ENCODE measurements at regions of chr16 and their contacts with region 1.

Region 1: DNA sequence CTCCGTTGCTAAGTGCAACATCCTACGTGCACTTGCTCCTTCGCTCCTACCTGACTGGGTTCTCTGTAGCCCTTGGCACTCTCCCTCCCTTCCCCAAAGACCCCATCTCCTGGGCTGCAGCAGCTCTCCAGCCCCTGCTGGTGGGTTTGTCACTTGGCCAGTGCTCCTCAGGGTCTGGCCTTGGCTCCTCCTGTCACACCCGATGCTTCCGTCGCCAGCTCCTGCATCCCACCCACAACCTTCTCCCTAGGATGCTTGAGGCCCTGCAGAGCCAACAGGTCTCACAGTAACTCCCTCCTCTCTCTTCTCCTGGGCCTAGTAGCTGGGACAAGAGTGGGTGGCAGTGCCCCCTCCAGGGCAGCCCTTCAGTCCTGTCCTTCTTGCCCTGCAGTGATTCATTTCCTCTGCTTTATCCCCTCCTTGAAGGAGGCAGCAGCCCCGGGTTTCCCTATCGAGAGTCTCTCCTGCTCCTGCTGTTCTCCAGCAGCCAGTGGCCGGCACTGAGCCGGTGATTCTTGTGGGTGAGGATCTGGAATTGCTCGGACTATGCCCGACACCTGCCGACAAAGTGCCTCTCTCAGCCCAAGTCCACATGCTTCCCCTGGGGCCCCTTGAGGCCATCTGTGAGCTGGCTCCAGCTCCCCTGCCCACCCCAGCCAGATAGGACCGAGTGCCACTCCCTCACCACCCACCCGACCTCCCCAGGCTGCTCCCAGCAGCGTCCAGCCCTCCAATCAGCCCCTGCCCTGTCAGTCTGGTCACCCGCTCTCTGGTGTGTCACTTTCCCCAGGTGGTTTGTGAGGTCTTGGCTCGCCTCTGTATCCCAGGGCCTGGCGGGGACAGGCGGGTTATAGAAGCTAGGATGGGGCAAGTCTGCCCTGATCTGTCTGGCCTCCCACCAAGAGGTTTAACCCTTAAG is 3.8 kb downstream of the LITAFD start:
- DNase-seq: no peak
- ATAC-seq: peak; percentile 22
- H3K4me3 Mint-ChIP-seq: no peak overlapping the region
- H3K27ac Mint-ChIP-seq: peak overlapping the region; percentile 19
- H3K4me1 Mint-ChIP-seq: peaks cover 24% of the 10 kb centered on the region
- H3K27me3 Mint-ChIP-seq: peaks cover 10% of the 10 kb centered on the region
- CTCF ChIP-seq: no peak

Region 2: DNA sequence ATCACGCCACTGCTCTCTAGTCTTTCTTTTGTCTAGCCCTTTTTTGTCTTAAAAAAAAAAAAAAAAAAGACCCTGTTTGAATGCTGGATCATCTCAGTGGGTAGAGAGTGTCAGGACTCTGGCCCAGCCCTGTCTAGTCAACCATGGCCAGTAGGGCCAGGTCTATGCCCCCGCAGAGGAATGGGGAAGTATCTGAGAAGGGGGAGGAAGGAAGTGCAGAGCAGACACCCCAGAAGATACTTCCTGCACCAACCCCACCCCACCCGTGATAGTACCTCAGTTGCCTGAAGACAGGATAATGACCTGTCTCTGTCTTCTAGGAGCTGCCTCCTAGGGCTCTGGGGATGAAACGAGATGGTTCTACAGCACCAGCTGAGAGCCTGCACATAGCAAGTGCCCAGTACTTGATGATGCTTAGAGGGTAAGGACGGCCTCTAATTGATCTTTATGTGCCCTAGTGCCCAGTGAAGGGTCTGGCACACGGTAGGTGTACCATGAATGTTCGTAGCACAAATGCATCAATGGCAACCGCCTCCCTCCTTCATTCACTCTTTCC is 156.1 kb before region 1 on chr16:
- CTCF ChIA-PET with region 1: no interaction called
- POLR2A ChIA-PET with region 1: no interaction called
- intact Hi-C with region 1: no loop called
- DNase-seq: peak; percentile 40
- ATAC-seq: peak; percentile 100
- H3K4me3 Mint-ChIP-seq: peak overlapping the region; percentile 73
- H3K27ac Mint-ChIP-seq: peak overlapping the region; percentile 85
- H3K4me1 Mint-ChIP-seq: peaks cover 59% of the 10 kb centered on the region
- H3K27me3 Mint-ChIP-seq: no peaks in the 10 kb centered on the region
- CTCF ChIP-seq: no peak

Region 3: DNA sequence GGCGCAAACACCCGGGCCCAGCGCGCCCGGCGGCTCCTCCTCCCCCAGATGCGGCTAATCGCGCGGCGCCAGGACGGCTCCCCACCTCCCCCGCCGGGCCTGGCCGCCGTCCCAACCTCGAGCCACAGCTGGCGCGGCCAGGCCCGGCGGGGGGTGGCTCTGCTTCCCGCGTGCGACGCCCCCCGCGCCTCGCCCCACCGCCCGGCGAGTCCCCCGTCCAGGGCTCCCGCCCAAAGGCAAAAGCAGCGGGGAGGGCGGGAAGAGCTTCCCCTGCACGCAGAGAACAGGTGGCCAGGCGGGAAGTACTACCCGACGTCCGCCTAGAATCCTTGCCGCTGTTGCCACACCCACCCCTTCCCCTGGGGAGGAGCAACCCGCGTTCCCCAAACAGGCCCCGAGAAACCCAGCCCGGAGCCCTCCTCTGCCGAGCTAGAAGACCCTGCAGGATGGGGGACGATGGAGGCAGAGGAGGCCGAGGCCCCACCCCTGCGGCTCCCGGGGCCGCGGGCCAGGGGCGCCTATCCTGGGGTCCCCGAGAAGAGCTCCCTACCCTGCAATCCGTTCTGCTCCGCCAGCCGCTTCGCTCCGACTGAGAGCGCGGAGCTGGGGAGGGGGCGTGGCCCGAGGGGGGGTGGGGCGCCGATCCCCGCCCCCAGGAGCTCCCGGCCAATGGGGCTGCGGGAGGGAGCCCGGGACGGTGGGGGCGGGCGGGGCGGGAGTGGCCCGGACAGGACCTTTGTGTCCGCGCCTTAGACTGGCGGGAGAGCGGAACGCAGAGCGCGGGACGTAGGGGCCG is 17.3 kb before region 1 on chr16 and contains the start of gene CARHSP1:
- CTCF ChIA-PET with region 1: interaction called, 36 read pairs
- POLR2A ChIA-PET with region 1: interaction called, 50 read pairs
- intact Hi-C with region 1: loop called (anchors 1 kb)
- DNase-seq: peak; percentile 77
- ATAC-seq: peak; percentile 79
- H3K4me3 Mint-ChIP-seq: peak within 1 kb of the TSS; percentile 93
- H3K27ac Mint-ChIP-seq: peak within 1 kb of the TSS; percentile 85
- H3K4me1 Mint-ChIP-seq: peaks cover 60% of the 10 kb centered on the region
- H3K27me3 Mint-ChIP-seq: no peaks in the 10 kb centered on the region
- CTCF ChIP-seq: no peak
- total RNA-seq, gene CARHSP1: 21.3 and 27.0 TPM in 2 replicates

Region 4: GRCh38 chr16:8928467-8928957 is 42.6 kb after region 1 on chr16:
- CTCF ChIA-PET with region 1: no interaction called
- POLR2A ChIA-PET with region 1: no interaction called
- intact Hi-C with region 1: loop called (anchors 1 kb)
- DNase-seq: no peak
- ATAC-seq: peak; percentile 43
- H3K4me3 Mint-ChIP-seq: peak overlapping the region; percentile 41
- H3K27ac Mint-ChIP-seq: peak overlapping the region; percentile 79
- H3K4me1 Mint-ChIP-seq: peaks cover 51% of the 10 kb centered on the region
- H3K27me3 Mint-ChIP-seq: no peaks in the 10 kb centered on the region
- CTCF ChIP-seq: no peak

Region 5: GRCh38 chr16:8943966-8944759 is 58.2 kb after region 1 on chr16:
- CTCF ChIA-PET with region 1: no interaction called
- POLR2A ChIA-PET with region 1: interaction called, 3 read pairs
- intact Hi-C with region 1: loop called (anchors 1 kb)
- DNase-seq: no peak
- ATAC-seq: peak; percentile 83
- H3K4me3 Mint-ChIP-seq: peak overlapping the region; percentile 80
- H3K27ac Mint-ChIP-seq: peak overlapping the region; percentile 88
- H3K4me1 Mint-ChIP-seq: peaks cover 99% of the 10 kb centered on the region
- H3K27me3 Mint-ChIP-seq: no peaks in the 10 kb centered on the region
- CTCF ChIP-seq: no peak

Region 6: DNA sequence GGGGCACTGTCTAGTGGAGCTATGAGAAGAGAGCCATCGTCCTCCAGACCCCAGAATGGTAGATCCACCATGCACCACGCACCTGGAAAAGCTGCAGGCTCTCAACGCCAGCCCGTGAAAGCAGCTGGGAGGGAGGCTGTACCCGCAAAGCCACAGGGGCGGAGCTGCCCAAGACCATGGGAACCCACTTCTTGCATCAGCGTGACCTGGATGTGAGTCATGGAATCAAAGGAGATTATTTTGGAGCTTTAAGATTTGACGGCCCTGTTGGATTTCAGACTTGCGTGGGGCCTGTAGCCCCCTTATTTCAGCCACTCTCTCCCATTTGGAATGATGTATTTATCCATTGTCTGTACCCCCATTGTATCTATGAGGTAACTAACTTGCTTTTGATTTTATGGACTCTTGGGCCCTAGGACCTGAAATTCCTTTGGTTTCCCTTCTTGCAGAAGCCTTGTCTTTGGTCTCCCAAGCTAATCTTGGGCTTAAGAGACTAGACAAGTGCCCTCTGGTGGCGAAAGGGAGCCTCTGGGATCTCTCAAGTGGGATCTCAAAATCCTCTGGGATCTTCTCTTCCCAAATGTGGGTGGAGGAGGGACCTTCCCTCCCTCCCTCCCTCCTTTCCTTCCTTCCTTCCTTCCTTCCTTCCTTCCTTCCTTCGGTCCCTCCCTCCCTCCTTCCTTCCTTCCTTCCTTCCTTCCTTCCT is 147.3 kb after region 1 on chr16:
- CTCF ChIA-PET with region 1: interaction called, 5 read pairs
- POLR2A ChIA-PET with region 1: interaction called, 4 read pairs
- intact Hi-C with region 1: loop called (anchors 1 kb)
- DNase-seq: no peak
- ATAC-seq: no peak
- H3K4me3 Mint-ChIP-seq: no peak overlapping the region
- H3K27ac Mint-ChIP-seq: no peak overlapping the region
- H3K4me1 Mint-ChIP-seq: no peaks in the 10 kb centered on the region
- H3K27me3 Mint-ChIP-seq: peaks cover 4% of the 10 kb centered on the region
- CTCF ChIP-seq: no peak